ENCODE measurements at regions of chr1 and their contacts with region 1.

Region 1: GRCh38 chr1:32876341-32877210 is 5.9 kb upstream of the FNDC5 start:
- DNase-seq: peak; percentile 45 to 81 (median 79)
- ATAC-seq: peak; percentile 52 to 59
- H3K4me3 ChIP-seq: no peak overlapping the region
- H3K27ac ChIP-seq: no peak overlapping the region
- H3K4me1 ChIP-seq: peaks cover 5% of the 10 kb centered on the region
- H3K27me3 ChIP-seq: no peaks in the 10 kb centered on the region

Region 2: GRCh38 chr1:32394141-32394889 is 482.3 kb before region 1 on chr1 and contains the start of gene BSDC1:
- intact Hi-C with region 1: loop called in 1 of 4 experiments (anchors 10 kb)
- DNase-seq: peak; percentile 98 to 99 (median 98)
- ATAC-seq: peak; percentile 98 to 99
- H3K4me3 ChIP-seq: peak within 1 kb of the TSS; percentile 68
- H3K27ac ChIP-seq: peak within 1 kb of the TSS; percentile 97
- H3K4me1 ChIP-seq: peaks cover 2% of the 10 kb centered on the region
- H3K27me3 ChIP-seq: no peaks in the 10 kb centered on the region
- total RNA-seq, gene BSDC1: 40.4 to 56.0 (median 48.6) TPM

Region 3: GRCh38 chr1:32702599-32703478 is 173.7 kb before region 1 on chr1 and contains the start of gene SYNC:
- intact Hi-C with region 1: loop called in 1 of 4 experiments (anchors 10 kb)
- DNase-seq: peak; percentile 83 to 92 (median 92)
- ATAC-seq: peak; percentile 83 to 84
- H3K4me3 ChIP-seq: peak within 1 kb of the TSS; percentile 66
- H3K27ac ChIP-seq: peak within 1 kb of the TSS; percentile 86
- H3K4me1 ChIP-seq: peaks cover 3% of the 10 kb centered on the region
- H3K27me3 ChIP-seq: no peaks in the 10 kb centered on the region
- total RNA-seq, gene SYNC: 18.4 to 33.6 (median 24.5) TPM

Region 4: DNA sequence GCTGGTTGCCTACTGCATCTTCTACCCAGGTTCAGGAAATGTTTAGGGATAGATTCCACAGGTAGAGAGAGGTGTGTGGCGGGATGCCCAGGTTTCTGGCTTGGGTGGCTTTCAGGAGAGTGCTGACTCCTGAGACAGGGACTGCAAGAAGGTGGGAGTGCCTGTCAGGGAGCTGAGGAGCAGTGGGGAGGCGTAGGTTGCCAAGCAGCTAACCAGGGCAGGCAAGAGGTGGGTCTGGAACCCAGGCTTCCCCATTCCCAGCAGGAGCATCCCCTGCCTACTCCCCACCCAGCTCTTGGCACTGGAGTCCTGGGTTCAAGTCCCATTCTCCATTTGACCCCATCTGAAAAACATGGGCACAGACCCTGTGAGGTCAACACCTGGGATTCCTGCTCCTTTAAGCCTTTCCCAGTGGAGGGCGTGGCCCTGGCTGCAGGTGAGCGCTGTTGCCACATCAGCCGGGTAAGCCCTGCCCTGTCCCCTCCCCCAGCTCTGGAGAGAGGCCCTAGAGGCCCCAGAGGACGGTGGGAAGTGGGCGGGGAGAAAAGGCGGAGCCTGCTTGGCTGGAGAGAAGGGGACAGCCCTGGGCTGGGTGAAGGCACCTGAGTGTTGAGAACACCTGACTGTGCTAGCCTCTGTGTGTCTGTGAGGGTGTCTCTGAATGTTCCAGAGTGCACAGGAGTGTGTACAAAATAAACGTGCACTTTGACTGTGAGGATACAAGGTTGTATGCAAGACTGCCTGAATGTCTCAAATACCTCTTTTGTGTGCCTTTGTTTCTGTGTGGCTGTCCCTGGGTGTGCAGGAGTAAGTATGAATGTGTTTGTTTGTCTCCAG is 160.0 kb before region 1 on chr1:
- intact Hi-C with region 1: loop called in 1 of 4 experiments (anchors 10 kb)
- DNase-seq: peak; percentile 53 to 78 (median 73)
- ATAC-seq: peak; percentile 52 to 75
- H3K4me3 ChIP-seq: no peak overlapping the region
- H3K27ac ChIP-seq: no peak overlapping the region
- H3K4me1 ChIP-seq: no peaks in the 10 kb centered on the region
- H3K27me3 ChIP-seq: no peaks in the 10 kb centered on the region

Region 5: DNA sequence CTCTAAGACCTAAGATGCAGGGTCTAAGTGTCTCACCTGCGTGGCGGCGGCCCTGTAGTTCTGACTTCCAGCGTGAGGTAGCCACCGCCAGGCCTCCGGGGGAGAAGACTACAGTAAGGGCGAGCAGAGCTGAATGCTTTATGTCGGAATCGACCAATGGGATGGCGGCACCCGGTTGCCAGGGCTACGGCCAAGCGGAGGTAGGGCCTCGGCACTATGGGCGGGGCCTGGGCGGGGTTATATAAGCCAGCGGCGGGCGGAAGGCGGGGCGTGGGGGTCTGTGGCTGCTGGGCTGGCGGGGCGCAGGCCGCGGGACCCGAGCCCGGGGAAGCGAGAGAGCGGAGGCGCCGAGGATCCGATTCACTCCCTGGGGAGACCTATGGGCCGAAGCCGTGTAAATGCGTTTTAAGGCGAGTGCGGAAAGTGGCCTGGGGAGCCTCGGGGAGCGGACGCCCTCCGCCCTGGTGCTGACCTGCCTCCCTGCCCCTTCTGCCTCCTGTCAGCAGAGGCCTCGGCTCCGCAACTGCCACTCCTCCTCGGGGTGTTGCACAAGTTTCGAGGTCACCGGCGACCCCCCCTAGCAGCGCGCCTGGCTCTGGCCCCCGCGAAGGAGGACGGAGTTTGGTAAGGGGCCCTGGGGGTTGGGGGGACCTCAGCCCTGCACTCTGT is 204.4 kb after region 1 on chr1 and contains the start of gene AZIN2:
- intact Hi-C with region 1: loop called in 2 of 4 experiments (anchors 10 kb)
- DNase-seq: peak; percentile 98 to 99 (median 99)
- ATAC-seq: peak; percentile 99
- H3K4me3 ChIP-seq: peak within 1 kb of the TSS; percentile 63
- H3K27ac ChIP-seq: no peak within 1 kb of the TSS
- H3K4me1 ChIP-seq: no peaks in the 10 kb centered on the region
- H3K27me3 ChIP-seq: no peaks in the 10 kb centered on the region
- total RNA-seq, gene AZIN2: 4.1 to 7.9 (median 5.4) TPM